PC-3 (cell line): ENCODE measurements at regions of chr2 and their contacts with region 1.

Region 1: DNA sequence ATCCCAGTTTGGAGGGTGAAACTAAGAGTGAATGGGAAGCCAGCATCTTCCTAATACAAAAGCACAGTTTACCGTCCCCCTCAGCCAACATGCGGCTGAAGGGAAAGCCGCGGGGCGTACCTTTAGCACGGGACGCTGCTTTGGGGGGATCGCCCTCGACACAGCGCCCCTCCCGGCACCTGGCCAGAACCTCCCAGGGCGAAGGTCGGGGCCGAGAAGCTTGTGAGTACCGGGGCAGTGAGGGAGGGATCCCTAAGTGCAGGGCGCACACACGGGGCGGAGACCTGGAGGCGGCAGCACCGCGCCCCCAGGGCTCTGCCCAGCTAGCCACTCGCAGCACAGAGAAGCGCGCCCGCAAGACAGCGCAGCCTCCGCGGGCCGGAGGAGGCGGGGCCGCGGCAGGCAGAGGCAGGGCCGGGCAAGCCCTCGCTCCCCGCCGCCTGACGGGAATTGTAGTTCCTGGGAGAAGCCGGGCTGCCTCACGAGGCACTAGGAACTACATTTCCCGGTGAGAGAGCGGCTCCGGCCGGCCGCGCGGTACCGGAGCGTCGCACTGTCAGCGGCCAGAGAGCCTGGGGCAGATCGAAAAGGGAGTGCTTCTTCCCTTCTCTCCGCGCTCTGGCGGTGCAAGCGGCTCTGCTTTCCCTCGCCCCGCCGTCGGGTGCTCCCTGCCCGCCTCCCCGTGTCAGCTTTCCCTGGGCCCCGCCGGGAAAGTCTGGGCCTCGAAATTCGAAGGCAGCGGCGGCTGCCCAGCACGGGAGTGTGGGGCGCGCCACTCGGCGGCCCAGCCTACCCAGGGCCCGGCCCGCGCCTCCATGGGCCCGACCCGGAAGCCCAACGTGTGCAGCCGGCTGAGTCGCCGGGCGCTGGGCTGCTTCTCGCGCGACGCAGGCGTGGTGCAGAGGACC is at the starts of genes DCAF17 and METTL8:
- DNase-seq: peak; percentile 97
- ATAC-seq: peak; percentile 94
- H3K4me3 ChIP-seq: peak within 1 kb of the TSS; percentile 90
- H3K27ac ChIP-seq: peak within 1 kb of the TSS; percentile 90
- H3K4me1 ChIP-seq: peaks cover 19% of the 10 kb centered on the region
- H3K27me3 ChIP-seq: no peaks in the 10 kb centered on the region
- CTCF ChIP-seq: peak; percentile 36; the same call in 1 of the 2 replicates
- total RNA-seq, gene DCAF17: 7.4 and 11.1 TPM in 2 replicates
- total RNA-seq, gene METTL8: 8.1 and 10.8 TPM in 2 replicates

Region 2: GRCh38 chr2:171154348-171154747 is 279.7 kb before region 1 on chr2:
- CTCF ChIA-PET with region 1: no interaction called
- POLR2A ChIA-PET with region 1: interaction called, 17 read pairs
- intact Hi-C with region 1: no loop called
- DNase-seq: peak; percentile 14
- ATAC-seq: peak; percentile 21; the same call in 1 of the 2 replicates
- H3K4me3 ChIP-seq: no peak overlapping the region
- H3K27ac ChIP-seq: no peak overlapping the region
- H3K4me1 ChIP-seq: peaks cover 21% of the 10 kb centered on the region
- H3K27me3 ChIP-seq: no peaks in the 10 kb centered on the region
- CTCF ChIP-seq: no peak

Region 3: DNA sequence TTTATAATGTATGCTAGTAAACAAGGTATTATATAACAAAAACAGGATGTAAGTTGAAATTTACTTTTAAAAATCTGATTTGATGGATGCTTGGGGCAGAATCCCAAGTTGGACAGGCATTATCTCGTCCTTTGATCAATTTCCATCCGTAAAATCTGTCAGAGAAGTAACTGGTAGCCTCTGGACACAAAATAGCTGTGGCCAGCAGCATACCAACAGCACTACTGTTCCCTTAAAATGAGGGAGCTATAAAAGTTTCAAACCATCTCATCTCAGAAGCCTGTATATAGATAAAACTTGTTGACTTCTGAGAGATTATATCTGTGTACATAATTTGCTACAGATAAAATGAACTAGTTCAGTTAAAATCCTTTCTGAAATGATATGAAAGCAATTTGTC is 551.1 kb after region 1 on chr2:
- CTCF ChIA-PET with region 1: no interaction called
- POLR2A ChIA-PET with region 1: no interaction called
- intact Hi-C with region 1: no loop called
- DNase-seq: no peak
- ATAC-seq: no peak
- H3K4me3 ChIP-seq: no peak overlapping the region
- H3K27ac ChIP-seq: no peak overlapping the region
- H3K4me1 ChIP-seq: no peaks in the 10 kb centered on the region
- H3K27me3 ChIP-seq: no peaks in the 10 kb centered on the region
- CTCF ChIP-seq: no peak